ENCODE measurements at regions of chr17 and their contacts with region 1.

Region 1: GRCh38 chr17:44968226-44969143 is at the start of gene C1QL1:
- DNase-seq: peak; percentile 86
- H3K4me3 Mint-ChIP-seq: peak within 1 kb of the TSS; percentile 78
- H3K27ac Mint-ChIP-seq: no peak within 1 kb of the TSS
- H3K4me1 Mint-ChIP-seq: peaks cover 38% of the 10 kb centered on the region
- H3K27me3 Mint-ChIP-seq: peaks cover 67% of the 10 kb centered on the region
- total RNA-seq, gene C1QL1: 0.39 and 0.54 TPM in 2 replicates

Region 2: DNA sequence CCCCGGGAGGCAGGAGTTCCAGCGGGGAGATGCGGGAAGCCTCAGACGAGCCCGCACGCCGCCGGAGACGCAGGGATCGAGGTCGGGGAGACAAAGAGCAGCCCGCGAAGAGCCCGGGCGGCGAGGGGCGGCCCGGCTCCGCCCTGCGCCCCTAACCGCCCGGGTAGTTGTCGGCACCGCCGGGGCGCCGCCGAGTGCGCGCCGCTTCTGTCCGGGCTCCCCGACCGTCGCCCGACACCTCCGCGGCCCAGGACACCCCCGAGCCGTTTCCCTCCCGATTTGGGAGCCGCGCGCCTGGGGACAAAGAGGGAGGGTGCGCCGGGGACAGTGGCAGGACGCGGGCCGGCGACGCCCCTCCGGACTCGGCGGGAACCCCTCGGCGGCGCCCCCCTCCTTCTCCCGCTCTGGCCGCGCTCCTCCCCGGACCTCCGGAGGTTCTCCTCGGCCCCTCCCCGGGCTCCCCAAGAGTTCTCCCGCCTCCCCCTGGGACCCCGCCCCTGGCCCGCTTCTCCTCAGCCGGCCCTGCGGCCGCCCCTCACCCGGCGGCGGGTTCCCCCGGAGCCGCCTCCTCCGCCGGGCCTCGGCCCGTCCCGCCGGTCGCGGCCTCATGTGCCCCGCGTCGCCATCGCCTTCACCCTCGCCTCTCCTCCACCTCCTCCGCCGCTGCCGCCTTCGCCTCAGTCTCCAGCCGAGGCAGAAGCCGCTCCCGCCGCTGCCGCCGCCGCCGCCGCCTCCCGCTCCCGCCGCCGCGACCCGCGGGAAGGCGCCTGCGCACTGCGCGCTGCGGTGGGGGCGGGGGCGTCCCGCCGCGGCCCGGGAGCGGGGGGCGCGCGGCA is 138.7 kb before region 1 on chr17 and contains the start of gene GJC1:
- intact Hi-C with region 1: loop called (anchors 5 kb)
- DNase-seq: no peak
- H3K4me3 Mint-ChIP-seq: peak within 1 kb of the TSS; percentile 82
- H3K27ac Mint-ChIP-seq: peak within 1 kb of the TSS; percentile 44
- H3K4me1 Mint-ChIP-seq: peaks cover 7% of the 10 kb centered on the region
- H3K27me3 Mint-ChIP-seq: peaks cover 62% of the 10 kb centered on the region
- total RNA-seq, gene GJC1: 4.7 and 5.7 TPM in 2 replicates

Region 3: DNA sequence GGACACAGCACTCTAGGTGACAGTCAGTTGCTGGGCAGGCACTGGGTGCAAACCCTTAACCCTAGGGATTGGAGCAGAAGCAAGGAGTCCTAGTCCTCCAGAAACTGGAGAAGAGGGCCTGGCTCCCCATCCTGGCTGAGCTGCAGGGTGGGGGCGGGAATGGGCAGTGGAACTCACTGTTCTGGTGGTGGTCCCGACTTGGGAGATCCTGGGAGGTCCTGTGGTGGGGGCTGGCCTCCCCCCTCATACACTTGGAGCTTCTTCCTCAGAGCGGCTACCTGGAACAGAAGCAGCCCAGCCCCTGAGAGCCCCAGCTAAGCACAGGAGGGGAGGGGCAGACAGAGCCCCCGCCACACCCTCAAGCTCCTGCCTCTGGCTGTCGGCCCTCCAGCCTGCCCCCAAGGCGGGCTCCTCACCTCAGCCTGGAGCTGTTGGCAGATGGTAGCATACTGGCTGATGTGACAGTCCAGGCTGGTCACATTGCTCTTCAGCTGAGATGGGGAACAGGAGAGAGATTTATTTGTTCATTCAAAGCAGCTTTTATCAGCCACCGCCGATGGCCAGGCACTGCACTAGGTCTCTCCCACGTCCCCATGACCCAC is 35.9 kb before region 1 on chr17:
- intact Hi-C with region 1: no loop called
- DNase-seq: no peak
- H3K4me3 Mint-ChIP-seq: no peak overlapping the region
- H3K27ac Mint-ChIP-seq: no peak overlapping the region
- H3K4me1 Mint-ChIP-seq: no peaks in the 10 kb centered on the region
- H3K27me3 Mint-ChIP-seq: no peaks in the 10 kb centered on the region

Region 4: GRCh38 chr17:44947461-44948314 is 20.8 kb before region 1 on chr17 and contains the start of gene KIF18B:
- intact Hi-C with region 1: loop called (anchors 1 kb)
- DNase-seq: peak; percentile 90
- H3K4me3 Mint-ChIP-seq: peak within 1 kb of the TSS; percentile 95
- H3K27ac Mint-ChIP-seq: peak within 1 kb of the TSS; percentile 92
- H3K4me1 Mint-ChIP-seq: peaks cover 37% of the 10 kb centered on the region
- H3K27me3 Mint-ChIP-seq: peaks cover 2% of the 10 kb centered on the region
- total RNA-seq, gene KIF18B: 41.4 and 42.8 TPM in 2 replicates

Region 5: DNA sequence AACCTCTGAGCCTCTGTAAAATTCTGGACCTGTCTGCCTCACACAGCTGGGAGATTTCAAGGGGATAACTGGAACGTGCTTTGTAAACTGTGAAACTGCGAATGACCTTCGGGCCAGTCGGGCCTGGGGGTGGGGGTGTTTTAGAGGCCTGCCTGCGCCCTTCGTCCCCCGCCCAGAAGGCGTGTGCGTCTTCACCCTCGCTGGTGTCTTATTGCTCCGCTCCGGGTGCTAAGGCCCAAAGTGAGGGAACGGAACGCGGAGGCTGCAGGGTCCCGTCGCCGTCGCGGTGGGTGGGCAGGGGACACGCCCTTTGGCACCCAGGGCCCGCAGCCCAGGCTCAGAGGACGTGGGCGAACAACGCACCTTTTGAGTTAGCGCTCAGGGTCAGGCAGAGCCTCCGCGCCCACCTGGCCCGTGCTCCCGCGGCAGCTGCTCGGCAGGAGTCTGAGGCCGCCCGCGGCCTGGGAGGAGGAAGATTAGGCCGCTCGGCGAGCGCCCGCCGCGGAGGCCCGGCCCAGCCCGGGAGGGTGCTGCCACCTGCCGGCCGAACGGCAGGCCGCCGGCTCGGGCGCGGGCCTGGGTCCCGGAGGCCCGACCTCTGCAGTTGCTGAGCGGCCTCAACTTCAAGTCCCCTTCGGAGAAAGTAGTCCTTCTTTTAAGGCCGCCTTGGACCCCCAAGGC is 53.3 kb after region 1 on chr17:
- intact Hi-C with region 1: loop called (anchors 2 kb)
- DNase-seq: peak; percentile 62
- H3K4me3 Mint-ChIP-seq: no peak overlapping the region
- H3K27ac Mint-ChIP-seq: no peak overlapping the region
- H3K4me1 Mint-ChIP-seq: peaks cover 22% of the 10 kb centered on the region
- H3K27me3 Mint-ChIP-seq: peaks cover 30% of the 10 kb centered on the region

Region 6: DNA sequence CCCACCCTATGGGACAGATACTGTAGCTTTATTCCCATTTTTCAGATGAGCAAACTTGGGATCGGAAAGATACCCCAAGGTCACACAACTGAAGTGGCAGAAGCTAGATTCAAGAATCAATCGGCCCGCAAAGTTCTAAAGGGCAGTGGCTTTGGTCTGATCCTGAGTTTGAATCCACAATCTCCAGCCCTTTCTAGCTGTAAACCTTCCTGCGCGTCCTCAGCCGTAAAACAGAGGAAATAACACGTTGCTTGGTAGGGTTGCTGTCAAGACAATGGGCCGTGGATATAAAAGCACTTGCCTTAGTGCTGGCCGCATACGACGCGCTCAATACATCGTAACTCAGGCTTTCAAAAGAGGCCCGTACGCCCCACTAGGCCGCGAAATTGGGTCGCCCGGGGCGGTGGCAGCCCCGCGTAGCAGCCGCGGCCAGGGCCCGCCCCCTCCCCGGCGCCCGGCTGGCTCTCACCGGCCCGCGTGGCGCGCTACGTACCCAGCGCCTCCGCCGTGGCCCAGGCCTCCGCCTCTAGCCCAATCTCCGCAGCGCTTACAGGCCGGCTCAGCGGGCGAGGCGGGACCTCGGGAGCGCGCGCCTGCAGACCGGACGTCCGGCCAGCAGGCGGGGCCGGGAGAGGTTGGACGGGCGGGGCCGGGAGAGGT is 82.7 kb after region 1 on chr17 and contains the start of gene DCAKD:
- intact Hi-C with region 1: loop called (anchors 1 kb)
- DNase-seq: peak; percentile 93
- H3K4me3 Mint-ChIP-seq: peak within 1 kb of the TSS; percentile 92
- H3K27ac Mint-ChIP-seq: peak within 1 kb of the TSS; percentile 94
- H3K4me1 Mint-ChIP-seq: peaks cover 47% of the 10 kb centered on the region
- H3K27me3 Mint-ChIP-seq: no peaks in the 10 kb centered on the region
- total RNA-seq, gene DCAKD: 24.0 and 24.9 TPM in 2 replicates

Region 7: DNA sequence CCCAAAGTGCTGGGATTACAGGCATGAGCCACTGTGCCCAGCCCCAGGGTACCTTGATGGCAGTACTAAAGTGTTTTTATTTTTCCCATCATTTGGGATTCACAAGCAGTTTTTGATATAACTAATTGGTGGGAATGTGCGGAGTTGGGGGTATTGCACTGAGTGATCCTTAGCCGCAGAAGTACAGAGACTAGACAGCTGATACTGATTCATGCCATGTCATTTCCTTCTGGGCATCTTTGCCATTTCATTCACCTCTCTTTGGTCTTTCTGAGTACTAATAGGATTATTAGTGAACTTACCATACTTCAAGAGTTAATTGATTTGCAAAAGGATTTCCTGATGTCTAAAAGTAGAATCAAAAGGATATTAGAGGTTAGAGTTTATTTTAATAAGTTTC is 102.3 kb after region 1 on chr17:
- intact Hi-C with region 1: no loop called
- DNase-seq: no peak
- H3K4me3 Mint-ChIP-seq: no peak overlapping the region
- H3K27ac Mint-ChIP-seq: no peak overlapping the region
- H3K4me1 Mint-ChIP-seq: peaks cover under 1% of the 10 kb centered on the region
- H3K27me3 Mint-ChIP-seq: no peaks in the 10 kb centered on the region